ENCODE measurements at regions of chr4 and their contacts with region 1.

Region 1: GRCh38 chr4:154506253-154506652 is 14.7 kb upstream of the DCHS2 start:
- DNase-seq: no peak
- ATAC-seq: no peak
- H3K4me3 ChIP-seq: no peak overlapping the region
- H3K27ac ChIP-seq: no peak overlapping the region
- H3K4me1 ChIP-seq: no peaks in the 10 kb centered on the region
- H3K27me3 ChIP-seq: 0 out of 2 replicates have a peak, but pooled peaks cover 2% of the 10 kb centered on the region
- CTCF ChIP-seq: peak; percentile 40; the same call in 1 of the 2 replicates

Region 2: DNA sequence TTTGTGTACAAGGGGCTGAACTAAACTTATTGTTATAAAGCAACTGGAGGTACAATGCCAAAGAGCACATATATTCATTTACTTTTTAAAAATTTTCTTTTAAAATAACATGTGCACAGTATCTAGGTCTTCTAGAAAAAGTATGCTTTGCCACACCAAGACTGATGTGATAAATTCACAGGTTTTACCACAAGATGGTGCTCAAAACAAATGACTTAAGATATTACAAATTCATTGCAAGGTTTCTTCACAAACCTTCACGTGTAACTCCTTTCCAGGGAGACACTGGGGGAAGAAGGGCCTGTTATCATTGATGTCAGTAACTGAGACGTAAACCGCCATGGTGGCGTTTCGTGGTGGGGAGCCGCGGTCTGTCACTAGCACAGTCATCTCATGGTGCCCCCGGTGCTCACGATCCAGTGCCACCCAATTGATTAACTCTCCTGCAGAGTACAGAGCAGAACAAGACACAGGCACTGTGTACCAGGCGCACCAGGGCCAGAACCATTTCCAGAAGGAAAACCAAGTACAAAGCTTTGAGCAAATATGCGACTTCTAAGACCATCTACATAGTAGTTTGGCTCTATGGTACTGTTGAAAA is 176.9 kb before region 1 on chr4:
- CTCF ChIA-PET with region 1: no interaction called
- POLR2A ChIA-PET with region 1: no interaction called
- in situ Hi-C with region 1: no loop called
- intact Hi-C with region 1: loop called (anchors 10 kb)
- DNase-seq: no peak
- ATAC-seq: no peak
- H3K4me3 ChIP-seq: no peak overlapping the region
- H3K27ac ChIP-seq: no peak overlapping the region
- H3K4me1 ChIP-seq: no peaks in the 10 kb centered on the region
- H3K27me3 ChIP-seq: no peaks in the 10 kb centered on the region
- CTCF ChIP-seq: peak; percentile 37; the same call in 1 of the 2 replicates

Region 3: GRCh38 chr4:154399259-154399974 is 106.8 kb before region 1 on chr4:
- CTCF ChIA-PET with region 1: interaction called, 3 read pairs
- POLR2A ChIA-PET with region 1: no interaction called
- in situ Hi-C with region 1: no loop called
- intact Hi-C with region 1: loop called (anchors 1 kb)
- DNase-seq: peak; percentile 32
- ATAC-seq: peak; percentile 51; the same call in 1 of the 2 replicates
- H3K4me3 ChIP-seq: peak overlapping the region; percentile 14 to 60
- H3K27ac ChIP-seq: no peak overlapping the region
- H3K4me1 ChIP-seq: no peaks in the 10 kb centered on the region
- H3K27me3 ChIP-seq: no peaks in the 10 kb centered on the region; the same call in 1 of the 2 replicates
- CTCF ChIP-seq: peak; percentile 56

Region 4: DNA sequence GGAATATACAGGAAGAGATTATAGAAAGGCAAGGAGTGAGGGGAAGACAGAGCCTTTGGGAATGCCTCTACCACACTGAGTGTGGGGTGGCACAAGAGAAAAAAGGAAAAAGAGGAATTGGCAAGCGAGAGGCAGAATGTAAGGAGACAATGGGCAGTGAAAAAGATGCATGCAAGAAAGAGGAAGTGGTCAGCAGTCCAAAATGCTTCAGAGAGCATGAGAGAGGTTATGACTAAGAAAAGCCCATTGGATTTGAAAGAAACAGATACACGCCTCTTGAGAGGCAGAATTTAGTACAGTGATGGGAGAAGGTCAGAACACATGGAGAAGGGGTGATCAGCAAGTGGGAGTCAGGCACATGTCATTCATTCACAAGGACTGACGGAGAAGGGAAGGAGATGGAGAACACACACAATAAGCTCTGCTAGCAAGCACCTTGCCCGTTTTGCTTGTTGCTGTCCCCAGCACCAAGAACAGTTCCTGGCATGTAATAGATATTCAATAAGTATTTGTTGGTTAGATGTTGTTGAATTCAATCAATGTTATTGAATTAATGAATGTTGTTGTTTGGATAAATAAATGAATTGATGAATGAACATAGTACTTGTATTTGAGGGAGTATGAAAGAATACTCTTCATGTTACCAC is 21.0 kb before region 1 on chr4:
- CTCF ChIA-PET with region 1: no interaction called
- POLR2A ChIA-PET with region 1: no interaction called
- in situ Hi-C with region 1: no loop called
- intact Hi-C with region 1: no loop called
- DNase-seq: no peak
- ATAC-seq: no peak
- H3K4me3 ChIP-seq: no peak overlapping the region
- H3K27ac ChIP-seq: no peak overlapping the region
- H3K4me1 ChIP-seq: no peaks in the 10 kb centered on the region
- H3K27me3 ChIP-seq: peaks cover 3% of the 10 kb centered on the region; the same call in 1 of the 2 replicates
- CTCF ChIP-seq: no peak

Region 5: GRCh38 chr4:154551872-154552686 is 45.8 kb after region 1 on chr4:
- CTCF ChIA-PET with region 1: no interaction called
- POLR2A ChIA-PET with region 1: interaction called, 13 read pairs
- in situ Hi-C with region 1: no loop called
- intact Hi-C with region 1: no loop called
- DNase-seq: peak; percentile 56
- ATAC-seq: peak; percentile 77
- H3K4me3 ChIP-seq: no peak overlapping the region
- H3K27ac ChIP-seq: no peak overlapping the region
- H3K4me1 ChIP-seq: peaks cover 8% of the 10 kb centered on the region
- H3K27me3 ChIP-seq: no peaks in the 10 kb centered on the region
- CTCF ChIP-seq: peak; percentile 81

Measured in Panc1 (cell line).